ENCODE measurements at regions of chr2 and their contacts with region 1.

Region 1: DNA sequence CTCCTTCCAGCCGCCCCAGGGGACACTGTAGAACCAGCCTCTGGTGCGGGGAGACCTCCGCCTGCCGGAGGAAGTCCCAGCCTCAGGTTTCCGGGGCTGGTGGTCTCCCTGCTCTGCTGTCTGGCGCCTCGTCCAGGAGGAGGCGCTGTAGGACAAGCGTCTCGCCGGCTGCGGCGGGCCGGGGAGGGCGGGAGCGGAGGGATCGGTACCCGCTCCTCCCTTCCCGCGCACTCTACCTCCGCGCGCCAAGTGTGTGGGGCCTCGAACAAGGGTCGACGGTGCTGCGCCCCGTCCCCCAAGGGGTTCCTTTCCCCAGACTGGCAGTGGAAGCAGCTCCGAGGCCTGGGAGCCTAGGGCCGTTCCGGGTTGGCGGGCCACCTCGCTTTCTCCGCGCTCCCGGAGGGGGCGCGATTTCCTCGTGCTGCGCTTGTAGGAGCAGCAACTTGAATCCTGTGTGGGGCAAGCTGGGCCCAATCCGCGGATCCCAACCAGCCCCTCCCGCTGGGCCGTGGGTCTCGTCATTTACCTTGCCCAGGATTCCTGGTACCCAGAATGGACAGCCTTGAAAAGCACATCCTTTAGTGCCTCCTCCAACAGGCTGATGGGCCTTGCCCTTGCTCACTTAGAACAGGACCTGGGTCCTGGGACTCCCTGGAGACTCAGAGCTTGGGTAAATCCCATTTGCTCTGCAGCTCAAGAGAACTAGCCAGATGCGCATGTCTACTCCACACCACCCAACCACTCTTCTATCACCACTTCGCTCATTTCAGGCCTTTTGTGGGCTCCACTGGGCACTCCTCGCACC is 10.6 kb upstream of the HOXD4 start:
- DNase-seq: peak; percentile 84 to 85
- ATAC-seq: peak; percentile 89 to 96
- H3K4me3 ChIP-seq: peak overlapping the region; percentile 49
- H3K27ac ChIP-seq: peak overlapping the region; percentile 87 to 99
- H3K4me1 ChIP-seq: no peaks in the 10 kb centered on the region
- CTCF ChIP-seq: peak; percentile 100
- EP300 ChIP-seq: no peak
- POLR2A ChIP-seq: peak; percentile 32; the same call in 1 of the 2 replicates
- RAD21 ChIP-seq: peak; percentile 90 to 100

Region 2: GRCh38 chr2:176151442-176152369 is 11.0 kb after region 1 on chr2 and contains the start of gene HOXD4:
- CTCF ChIA-PET with region 1: interaction called, 22 read pairs
- POLR2A ChIA-PET with region 1: no interaction called
- DNase-seq: no peak
- ATAC-seq: peak; percentile 26 to 76; a peak in 3 of 6 replicates
- H3K4me3 ChIP-seq: peak within 1 kb of the TSS; percentile 35
- H3K27ac ChIP-seq: peak within 1 kb of the TSS in 1 of 2 experiments; percentile 68; a peak in 2 of 6 replicates
- H3K4me1 ChIP-seq: no peaks in the 10 kb centered on the region
- CTCF ChIP-seq: no peak
- EP300 ChIP-seq: no peak
- POLR2A ChIP-seq: no peak
- RAD21 ChIP-seq: no peak
- polyA plus RNA-seq, gene HOXD4: 0.27 and 0.28 TPM in 2 replicates

Region 3: GRCh38 chr2:176187899-176188773 is 47.4 kb after region 1 on chr2 and contains the start of gene HOXD1:
- CTCF ChIA-PET with region 1: interaction called, 12 read pairs
- POLR2A ChIA-PET with region 1: no interaction called
- DNase-seq: peak; percentile 57 to 78
- ATAC-seq: peak; percentile 94 to 96
- H3K4me3 ChIP-seq: peak within 1 kb of the TSS; percentile 56
- H3K27ac ChIP-seq: peak within 1 kb of the TSS; percentile 44 to 81; a peak in 5 of 6 replicates
- H3K4me1 ChIP-seq: 0 out of 3 replicates have a peak, but pooled peaks cover 5% of the 10 kb centered on the region
- CTCF ChIP-seq: no peak
- EP300 ChIP-seq: no peak
- POLR2A ChIP-seq: no peak; the same call in 1 of the 2 replicates
- RAD21 ChIP-seq: no peak
- polyA plus RNA-seq, gene HOXD1: 0.12 and 0.17 TPM in 2 replicates

Region 4: GRCh38 chr2:176445956-176446355 is 305.2 kb after region 1 on chr2:
- CTCF ChIA-PET with region 1: interaction called, 181 read pairs
- POLR2A ChIA-PET with region 1: no interaction called
- DNase-seq: peak in 1 of 2 experiments; percentile 14
- ATAC-seq: peak; percentile 50 to 61; a peak in 4 of 6 replicates
- H3K4me3 ChIP-seq: no peak overlapping the region
- H3K27ac ChIP-seq: no peak overlapping the region
- H3K4me1 ChIP-seq: peaks cover 16% of the 10 kb centered on the region
- CTCF ChIP-seq: no peak
- EP300 ChIP-seq: no peak
- POLR2A ChIP-seq: no peak
- RAD21 ChIP-seq: no peak

Region 5: GRCh38 chr2:176554101-176555048 is 413.7 kb after region 1 on chr2:
- CTCF ChIA-PET with region 1: interaction called, 71 read pairs
- POLR2A ChIA-PET with region 1: interaction called, 9 read pairs
- DNase-seq: peak; percentile 61 to 69
- ATAC-seq: peak; percentile 77 to 79
- H3K4me3 ChIP-seq: peak overlapping the region; percentile 46
- H3K27ac ChIP-seq: peak overlapping the region; percentile 77 to 90
- H3K4me1 ChIP-seq: no peaks in the 10 kb centered on the region
- CTCF ChIP-seq: peak; percentile 84
- EP300 ChIP-seq: no peak
- POLR2A ChIP-seq: no peak
- RAD21 ChIP-seq: peak; percentile 79 to 81

Region 6: DNA sequence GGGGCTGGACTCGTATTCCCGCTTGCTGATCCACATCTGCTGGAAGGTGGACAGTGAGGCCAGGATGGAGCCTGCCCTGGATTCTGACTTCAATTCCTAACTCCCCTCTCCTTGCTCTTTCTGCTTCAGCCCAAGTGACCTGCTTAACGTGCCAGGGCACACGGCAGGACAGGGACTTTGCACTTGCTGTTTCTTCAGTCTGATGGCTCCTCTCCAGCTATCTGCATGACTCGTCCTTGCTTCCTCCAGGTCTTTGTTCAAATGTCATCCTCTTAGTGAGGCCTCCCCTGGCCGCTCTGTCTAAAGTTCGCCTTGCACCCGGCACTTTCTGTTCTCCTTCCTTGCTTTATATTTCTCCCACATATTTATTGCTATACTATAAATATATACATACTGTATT is 486.1 kb after region 1 on chr2:
- CTCF ChIA-PET with region 1: interaction called, 17 read pairs
- POLR2A ChIA-PET with region 1: no interaction called
- DNase-seq: no peak
- ATAC-seq: 0 out of 6 replicates have a peak, but pooled peaks of 1 of the 2 experiments have one; percentile 34
- H3K4me3 ChIP-seq: no peak overlapping the region
- H3K27ac ChIP-seq: no peak overlapping the region
- H3K4me1 ChIP-seq: no peaks in the 10 kb centered on the region
- CTCF ChIP-seq: no peak
- EP300 ChIP-seq: no peak
- POLR2A ChIP-seq: no peak
- RAD21 ChIP-seq: no peak

Region 7: DNA sequence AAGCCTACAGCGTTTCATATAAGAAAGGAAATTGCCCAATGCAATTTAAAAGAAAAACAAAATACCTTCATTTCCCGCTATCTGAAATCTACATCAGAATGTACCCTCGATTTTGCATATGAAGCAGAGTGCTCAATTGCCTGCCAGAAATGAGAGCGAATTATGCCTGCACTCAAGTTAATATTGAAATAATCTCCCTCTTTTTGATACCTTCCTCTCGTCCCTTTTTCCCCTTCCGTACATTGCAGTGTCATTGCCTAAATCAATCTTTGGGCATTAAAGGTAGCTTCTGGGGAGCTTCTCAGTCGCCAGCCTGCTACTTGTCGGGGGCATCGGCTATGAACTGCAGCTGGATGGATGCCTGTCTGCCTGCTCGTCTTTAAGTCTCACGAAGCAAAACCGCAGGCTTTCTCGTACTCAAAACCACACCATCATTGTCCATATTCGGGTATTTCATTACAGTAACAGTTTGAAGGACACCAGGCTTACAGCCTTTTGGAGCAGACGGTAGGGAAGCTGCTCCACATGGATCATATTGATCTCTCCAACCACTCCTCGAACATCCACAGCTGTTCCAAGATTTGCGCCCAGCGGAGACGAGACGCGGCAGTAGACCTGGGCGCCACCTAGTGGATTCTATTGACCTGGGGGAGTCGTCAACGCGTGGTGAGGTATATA is 1007.9 kb after region 1 on chr2:
- CTCF ChIA-PET with region 1: interaction called, 13 read pairs
- POLR2A ChIA-PET with region 1: no interaction called
- DNase-seq: peak; percentile 61 to 75
- ATAC-seq: peak; percentile 99
- H3K4me3 ChIP-seq: peak overlapping the region; percentile 48
- H3K27ac ChIP-seq: no peak overlapping the region
- H3K4me1 ChIP-seq: peaks cover 9% of the 10 kb centered on the region; the same call in 1 of the 3 replicates
- CTCF ChIP-seq: peak; percentile 85
- EP300 ChIP-seq: no peak
- POLR2A ChIP-seq: no peak
- RAD21 ChIP-seq: peak; percentile 63 to 68